Activated naive CD4-positive, alpha-beta T cell treated with anti-CD3 and anti-CD28 coated beads for 36 hours (primary cell): ENCODE measurements at regions of chr20 and their contacts with region 1.

Region 1: DNA sequence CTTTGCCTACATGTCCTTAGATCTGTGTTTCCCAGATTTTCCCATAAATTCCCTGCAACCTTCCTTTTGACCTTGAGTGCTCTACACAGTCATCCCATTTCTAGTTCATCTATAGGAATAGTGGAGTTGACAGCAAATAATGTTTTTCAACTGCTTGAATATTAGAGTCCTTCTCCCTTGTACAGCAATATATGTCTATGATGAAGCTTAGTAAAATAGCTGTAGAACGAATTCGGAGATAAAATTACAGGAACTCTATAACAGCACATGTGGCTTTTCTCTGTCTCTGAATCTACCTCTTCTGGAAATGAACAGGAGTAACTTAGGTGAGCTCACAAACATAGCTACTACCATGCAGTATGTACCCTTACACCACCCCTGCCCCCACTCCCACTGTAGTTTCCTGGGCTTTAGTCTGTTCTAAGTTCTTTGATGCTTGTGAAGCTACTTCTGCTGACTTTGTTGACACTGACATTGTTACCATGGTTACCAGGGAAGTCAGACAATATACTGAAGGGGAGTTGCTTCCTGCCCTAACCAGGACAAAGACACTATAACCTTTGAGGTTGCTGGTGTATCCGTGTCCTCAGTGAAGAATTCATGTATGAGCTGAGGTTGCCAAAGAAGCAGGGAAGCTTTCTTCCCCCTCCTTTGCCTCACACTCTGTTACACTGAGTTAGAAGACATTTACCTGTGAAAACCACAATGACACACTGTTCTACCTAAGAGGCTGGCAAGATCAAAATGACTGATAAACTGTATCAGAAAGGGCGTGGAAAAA is 35.8 kb upstream of the SHLD1 start:
- DNase-seq: peak; percentile 75
- H3K4me3 Mint-ChIP-seq: no peak overlapping the region
- H3K27ac Mint-ChIP-seq: peak overlapping the region; percentile 72
- H3K4me1 Mint-ChIP-seq: peaks cover 28% of the 10 kb centered on the region
- H3K27me3 Mint-ChIP-seq: no peaks in the 10 kb centered on the region

Region 2: GRCh38 chr20:5642155-5642981 is 72.1 kb before region 1 on chr20:
- CTCF ChIA-PET with region 1: no interaction called
- intact Hi-C with region 1: loop called (anchors 1 kb)
- DNase-seq: no peak
- H3K4me3 Mint-ChIP-seq: no peak overlapping the region
- H3K27ac Mint-ChIP-seq: no peak overlapping the region
- H3K4me1 Mint-ChIP-seq: peaks cover 42% of the 10 kb centered on the region
- H3K27me3 Mint-ChIP-seq: no peaks in the 10 kb centered on the region

Region 3: DNA sequence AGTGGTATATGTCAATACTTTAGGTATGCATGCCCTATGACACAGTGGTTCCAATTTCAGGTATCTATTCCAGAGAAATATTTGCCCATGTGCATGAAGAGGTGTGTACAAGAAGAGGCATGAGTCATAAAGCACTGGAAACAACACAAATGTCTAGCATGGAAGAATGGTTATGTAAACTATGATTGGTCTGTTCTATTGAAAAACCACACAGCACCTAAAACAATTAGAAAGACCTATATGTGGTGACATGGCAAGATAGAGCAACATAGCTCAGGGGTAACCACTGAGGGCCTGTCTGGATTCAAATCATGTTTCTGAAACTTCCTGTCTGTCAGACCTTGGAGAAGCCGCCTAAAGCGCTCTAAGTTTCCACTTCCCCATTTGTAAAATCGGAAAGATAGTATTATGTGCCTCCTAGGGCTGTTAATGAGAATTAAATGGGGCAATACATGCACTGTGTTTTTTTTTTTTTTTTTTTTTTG is 40.2 kb before region 1 on chr20:
- CTCF ChIA-PET with region 1: no interaction called
- intact Hi-C with region 1: loop called (anchors 1 kb)
- DNase-seq: peak; percentile 15
- H3K4me3 Mint-ChIP-seq: no peak overlapping the region
- H3K27ac Mint-ChIP-seq: no peak overlapping the region
- H3K4me1 Mint-ChIP-seq: peaks cover 7% of the 10 kb centered on the region
- H3K27me3 Mint-ChIP-seq: no peaks in the 10 kb centered on the region

Region 4: GRCh38 chr20:5691918-5692618 is 22.4 kb before region 1 on chr20:
- CTCF ChIA-PET with region 1: no interaction called
- intact Hi-C with region 1: no loop called
- DNase-seq: no peak
- H3K4me3 Mint-ChIP-seq: no peak overlapping the region
- H3K27ac Mint-ChIP-seq: no peak overlapping the region
- H3K4me1 Mint-ChIP-seq: no peaks in the 10 kb centered on the region
- H3K27me3 Mint-ChIP-seq: no peaks in the 10 kb centered on the region

Region 5: GRCh38 chr20:5749952-5750779 is 35.7 kb after region 1 on chr20 and contains the start of gene SHLD1:
- CTCF ChIA-PET with region 1: interaction called, 5 read pairs
- intact Hi-C with region 1: loop called (anchors 1 kb)
- DNase-seq: peak; percentile 89
- H3K4me3 Mint-ChIP-seq: peak within 1 kb of the TSS; percentile 93
- H3K27ac Mint-ChIP-seq: peak within 1 kb of the TSS; percentile 97
- H3K4me1 Mint-ChIP-seq: peaks cover 17% of the 10 kb centered on the region
- H3K27me3 Mint-ChIP-seq: no peaks in the 10 kb centered on the region
- total RNA-seq, gene SHLD1: 10.1 TPM

Region 6: GRCh38 chr20:5950271-5951031 is 236.0 kb after region 1 on chr20 and contains the starts of genes MCM8 and TRMT6:
- CTCF ChIA-PET with region 1: no interaction called
- intact Hi-C with region 1: loop called (anchors 1 kb)
- DNase-seq: peak; percentile 98
- H3K4me3 Mint-ChIP-seq: peak within 1 kb of the TSS; percentile 97
- H3K27ac Mint-ChIP-seq: peak within 1 kb of the TSS; percentile 95
- H3K4me1 Mint-ChIP-seq: peaks cover 61% of the 10 kb centered on the region
- H3K27me3 Mint-ChIP-seq: no peaks in the 10 kb centered on the region
- total RNA-seq, gene MCM8: 49.6 to 50.3 TPM
- total RNA-seq, gene TRMT6: 11.5 to 11.8 TPM